Activated naive CD4-positive, alpha-beta T cell treated with anti-CD3 and anti-CD28 coated beads for 36 hours (primary cell): ENCODE measurements at regions of chr11 and their contacts with region 1.

Region 1: GRCh38 chr11:47259178-47259977 is 1.6 kb downstream of the NR1H3 start:
- DNase-seq: peak; percentile 40
- H3K4me3 Mint-ChIP-seq: no peak overlapping the region
- H3K27ac Mint-ChIP-seq: no peak overlapping the region
- H3K4me1 Mint-ChIP-seq: peaks cover 8% of the 10 kb centered on the region
- H3K27me3 Mint-ChIP-seq: no peaks in the 10 kb centered on the region

Region 2: DNA sequence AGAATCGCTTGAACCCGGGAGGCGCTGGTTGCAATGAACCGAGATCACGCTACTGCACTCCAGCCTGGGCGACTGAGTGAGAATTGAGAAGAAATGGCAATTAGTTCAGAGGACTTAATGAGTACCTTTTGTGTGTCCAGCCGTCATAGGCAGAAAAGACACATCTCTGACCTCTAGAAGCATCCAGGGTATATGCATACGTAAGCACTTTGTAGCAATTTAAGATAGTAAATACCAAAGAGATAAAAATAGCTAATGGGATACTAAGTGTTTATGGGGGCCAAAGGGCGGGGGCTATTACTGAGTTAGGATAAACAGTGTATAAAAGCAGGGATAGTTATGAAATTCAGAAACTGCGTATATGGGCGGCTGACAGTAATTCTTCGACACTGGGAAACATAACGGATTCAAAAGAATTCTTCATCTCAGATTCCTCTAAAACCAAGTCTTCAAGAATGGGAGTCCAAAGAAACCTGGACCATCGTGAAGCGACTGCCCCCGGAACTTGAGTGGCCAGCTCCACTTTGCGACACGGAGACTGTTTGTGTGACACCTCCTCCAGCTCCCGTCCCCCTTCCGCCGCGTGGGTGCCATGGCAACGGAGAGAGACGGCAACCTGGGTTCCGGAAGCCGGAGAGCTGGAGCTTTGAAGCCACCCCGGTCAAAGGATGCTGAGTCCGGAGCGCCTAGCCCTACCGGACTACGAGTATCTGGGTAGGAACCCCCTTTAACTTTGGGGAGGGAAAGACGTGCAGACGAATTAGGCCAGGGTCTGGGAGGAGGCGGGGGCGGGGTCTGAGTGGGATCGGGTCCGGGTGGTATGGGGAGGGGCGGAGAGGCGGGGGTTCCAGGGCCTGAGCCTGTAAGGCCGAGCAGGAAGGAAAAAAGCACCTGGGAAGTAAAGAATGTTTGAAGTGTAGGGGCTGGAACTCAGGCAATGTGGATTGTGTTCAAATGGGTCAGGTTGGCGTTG is 323.0 kb before region 1 on chr11 and contains the start of gene CSTPP1:
- CTCF ChIA-PET with region 1: no interaction called
- intact Hi-C with region 1: no loop called
- DNase-seq: peak; percentile 97
- H3K4me3 Mint-ChIP-seq: peak within 1 kb of the TSS; percentile 98
- H3K27ac Mint-ChIP-seq: peak within 1 kb of the TSS; percentile 88
- H3K4me1 Mint-ChIP-seq: peaks cover 18% of the 10 kb centered on the region
- H3K27me3 Mint-ChIP-seq: no peaks in the 10 kb centered on the region
- total RNA-seq, gene CSTPP1: 14.0 TPM

Region 3: GRCh38 chr11:47233989-47234668 is 25.2 kb before region 1 on chr11:
- CTCF ChIA-PET with region 1: interaction called, 14 read pairs
- intact Hi-C with region 1: no loop called
- DNase-seq: peak; percentile 38
- H3K4me3 Mint-ChIP-seq: peak overlapping the region; percentile 3
- H3K27ac Mint-ChIP-seq: peak overlapping the region; percentile 77
- H3K4me1 Mint-ChIP-seq: peaks cover 30% of the 10 kb centered on the region
- H3K27me3 Mint-ChIP-seq: no peaks in the 10 kb centered on the region

Region 4: GRCh38 chr11:47399860-47400767 is 140.7 kb after region 1 on chr11:
- CTCF ChIA-PET with region 1: no interaction called
- intact Hi-C with region 1: no loop called
- DNase-seq: peak; percentile 36
- H3K4me3 Mint-ChIP-seq: peak overlapping the region; percentile 74
- H3K27ac Mint-ChIP-seq: peak overlapping the region; percentile 79
- H3K4me1 Mint-ChIP-seq: peaks cover 22% of the 10 kb centered on the region
- H3K27me3 Mint-ChIP-seq: no peaks in the 10 kb centered on the region